ENCODE measurements at regions of chr3 and their contacts with region 1.

Region 1: DNA sequence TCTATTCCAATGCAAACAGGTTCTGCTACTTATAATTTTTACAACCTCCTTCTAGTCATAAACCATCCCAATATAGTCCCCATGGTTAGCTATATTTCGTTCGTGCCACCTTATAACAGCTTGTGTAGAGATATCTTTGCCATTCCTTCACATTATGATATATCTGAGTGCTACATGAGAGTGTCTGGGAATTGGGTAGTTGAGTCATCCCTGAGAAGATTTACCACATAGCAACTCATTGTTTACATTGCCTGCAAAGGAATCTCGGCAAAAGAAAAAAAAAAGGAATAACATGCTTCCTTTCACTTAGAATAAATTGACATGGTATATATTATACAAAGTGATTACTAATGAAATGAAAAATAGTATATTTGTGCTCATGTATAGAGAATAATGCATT is 86.0 kb upstream of the VGLL3 start:
- DNase-seq: no peak
- H3K4me3 ChIP-seq: no peak overlapping the region
- H3K27ac ChIP-seq: no peak overlapping the region
- H3K4me1 ChIP-seq: no peaks in the 10 kb centered on the region
- CTCF ChIP-seq: no peak

Region 2: DNA sequence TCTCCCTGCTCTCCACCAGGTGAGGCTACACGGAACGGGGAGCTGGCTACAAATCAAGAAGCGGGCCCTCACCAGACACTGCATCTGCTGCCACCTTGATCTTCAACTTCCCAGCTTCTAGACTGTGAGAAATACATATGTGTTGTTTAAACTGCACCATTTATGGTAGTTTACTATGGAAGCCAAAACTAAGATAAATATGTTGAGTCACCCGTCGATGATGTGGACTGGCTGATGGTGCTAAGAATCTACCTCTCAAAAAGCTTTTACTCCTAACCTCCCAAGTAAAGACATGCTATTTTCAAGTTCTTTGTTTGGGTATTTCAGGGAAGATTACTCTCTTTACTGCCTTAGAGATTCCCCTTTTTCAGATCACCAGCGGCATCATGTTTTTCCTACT is 196.9 kb before region 1 on chr3:
- CTCF ChIA-PET with region 1: no interaction called
- POLR2A ChIA-PET with region 1: no interaction called
- intact Hi-C with region 1: no loop called
- DNase-seq: no peak
- H3K4me3 ChIP-seq: no peak overlapping the region
- H3K27ac ChIP-seq: no peak overlapping the region
- H3K4me1 ChIP-seq: no peaks in the 10 kb centered on the region
- CTCF ChIP-seq: no peak

Region 3: GRCh38 chr3:87006844-87007439 is 70.0 kb before region 1 on chr3:
- CTCF ChIA-PET with region 1: no interaction called
- POLR2A ChIA-PET with region 1: no interaction called
- intact Hi-C with region 1: loop called (anchors 10 kb)
- DNase-seq: no peak
- H3K4me3 ChIP-seq: no peak overlapping the region
- H3K27ac ChIP-seq: no peak overlapping the region
- H3K4me1 ChIP-seq: no peaks in the 10 kb centered on the region
- CTCF ChIP-seq: peak; percentile 58

Region 4: DNA sequence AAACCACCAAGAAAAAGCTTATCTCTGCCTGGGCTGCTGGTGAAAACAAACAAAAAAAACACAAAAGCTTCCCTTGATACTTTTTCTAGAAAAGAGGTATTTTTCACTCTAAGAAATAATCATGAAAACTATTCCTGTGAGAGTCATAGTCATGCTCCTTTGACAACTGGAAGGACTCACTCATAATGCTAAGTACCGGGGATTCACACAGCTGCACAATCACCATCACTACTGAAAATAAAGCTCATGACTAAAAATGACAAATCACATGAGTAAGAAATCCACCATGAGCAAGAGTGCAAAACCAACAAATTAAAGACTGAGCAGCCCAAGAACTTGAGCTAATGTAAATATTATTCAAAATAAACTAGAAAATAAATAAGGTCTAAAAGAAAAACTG is 210.1 kb after region 1 on chr3:
- CTCF ChIA-PET with region 1: no interaction called
- POLR2A ChIA-PET with region 1: no interaction called
- intact Hi-C with region 1: no loop called
- DNase-seq: no peak
- H3K4me3 ChIP-seq: no peak overlapping the region
- H3K27ac ChIP-seq: no peak overlapping the region
- H3K4me1 ChIP-seq: no peaks in the 10 kb centered on the region
- CTCF ChIP-seq: no peak

Measured in OCI-LY7 (cell line).